Right cardiac atrium (tissue), 5 donors: ENCODE measurements at regions of chr20 and their contacts with region 1.

Region 1: GRCh38 chr20:58692594-58693226 is at the start of gene NPEPL1:
- DNase-seq: peak; percentile 78 to 91 (median 91)
- ATAC-seq: peak; percentile 81 to 90
- H3K4me3 ChIP-seq: peak within 1 kb of the TSS; percentile 87
- H3K27ac ChIP-seq: peak within 1 kb of the TSS; percentile 82
- H3K4me1 ChIP-seq: peaks cover 5% of the 10 kb centered on the region
- H3K27me3 ChIP-seq: no peaks in the 10 kb centered on the region
- total RNA-seq, gene NPEPL1: 22.0 to 28.8 (median 23.0) TPM

Region 2: DNA sequence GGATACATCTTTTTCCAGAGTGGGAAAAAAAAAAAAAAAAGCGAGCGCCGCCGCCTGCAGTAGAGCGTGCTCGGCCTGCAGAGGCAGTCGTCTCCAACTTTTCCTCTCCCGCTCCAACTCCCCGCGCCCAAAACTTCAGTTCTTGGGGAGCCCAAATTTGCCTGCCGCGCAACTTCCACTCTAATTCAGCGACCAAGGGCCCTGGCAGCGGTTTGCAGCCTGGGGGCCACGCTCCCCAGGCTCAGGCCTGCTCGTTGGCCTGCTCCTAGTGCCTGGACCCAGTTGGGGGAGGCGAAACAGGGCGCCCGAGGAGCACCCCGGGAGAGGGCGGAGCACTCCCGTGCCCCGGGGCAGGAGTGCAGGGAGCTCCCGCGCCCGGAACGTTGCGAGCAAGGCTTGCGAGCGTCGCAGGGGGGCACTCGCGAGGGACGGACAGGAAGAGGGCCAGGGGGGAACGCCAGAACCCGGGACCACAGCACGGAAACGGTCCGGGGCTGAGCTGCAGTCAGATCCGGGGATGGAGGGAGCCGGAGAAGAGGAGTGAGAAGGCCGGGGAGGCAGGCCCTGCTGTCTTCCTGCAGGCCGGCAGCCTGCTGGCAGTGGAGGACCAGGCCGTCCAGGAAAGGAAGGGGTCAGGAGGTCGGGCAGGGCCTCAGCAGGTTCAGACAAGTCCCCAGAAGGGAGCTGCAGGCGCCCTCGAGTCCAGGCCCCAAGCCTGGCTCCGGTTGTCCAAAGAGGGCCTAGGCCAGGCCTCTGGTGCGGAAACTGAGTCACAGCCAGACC is 41.7 kb before region 1 on chr20 and contains the start of gene STX16:
- intact Hi-C with region 1: loop called in 2 of 4 experiments (anchors 5 kb)
- DNase-seq: peak; percentile 90 to 96 (median 96)
- ATAC-seq: peak; percentile 96 to 97
- H3K4me3 ChIP-seq: peak within 1 kb of the TSS; percentile 87
- H3K27ac ChIP-seq: peak within 1 kb of the TSS; percentile 93
- H3K4me1 ChIP-seq: peaks cover 3% of the 10 kb centered on the region
- H3K27me3 ChIP-seq: no peaks in the 10 kb centered on the region
- total RNA-seq, gene STX16: 28.0 to 35.0 (median 33.3) TPM